ENCODE measurements at regions of chr1 and their contacts with region 1.

Region 1: DNA sequence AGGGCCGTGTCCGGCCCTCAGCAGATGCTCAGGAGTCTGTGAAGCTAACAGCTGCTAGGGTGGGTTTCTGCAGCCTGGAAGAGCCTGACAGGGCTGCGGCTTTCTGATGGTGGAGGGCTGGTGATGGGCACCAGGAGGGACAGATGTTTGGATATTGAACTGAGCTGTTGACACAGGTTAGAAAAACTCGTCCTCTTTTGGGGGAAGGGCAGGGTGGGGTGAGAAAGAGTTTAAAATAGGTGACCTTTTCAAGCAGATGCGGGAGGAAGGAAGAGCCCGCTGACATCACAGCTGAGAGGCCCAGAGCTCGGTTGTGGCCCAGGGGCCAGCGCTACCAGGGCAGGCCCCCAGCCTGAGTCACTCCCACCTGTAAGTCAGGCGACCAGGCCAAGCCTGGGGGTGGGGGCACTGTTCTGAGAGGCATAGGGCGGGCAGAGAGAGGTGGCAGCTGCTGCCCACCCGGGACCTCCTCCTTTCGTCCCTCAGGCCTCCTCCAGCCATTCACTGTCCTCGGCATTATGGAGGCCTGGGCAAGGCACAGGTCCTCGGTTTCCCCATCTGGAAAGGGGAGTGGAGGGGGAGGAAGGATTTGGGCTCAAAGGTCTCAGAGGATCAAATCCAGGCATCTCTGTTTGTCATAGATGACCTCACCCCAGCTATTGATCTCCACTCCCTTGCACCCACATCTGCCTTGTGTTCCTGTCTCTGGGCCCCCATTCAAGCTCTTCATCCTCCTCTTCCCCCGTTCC is 32.3 kb upstream of the ID3 start:
- DNase-seq: peak; percentile 66
- ATAC-seq: peak; percentile 81
- H3K4me3 Mint-ChIP-seq: peak overlapping the region; percentile 62
- H3K27ac Mint-ChIP-seq: peak overlapping the region; percentile 92
- H3K4me1 Mint-ChIP-seq: peaks cover 60% of the 10 kb centered on the region
- H3K27me3 Mint-ChIP-seq: no peaks in the 10 kb centered on the region

Region 2: DNA sequence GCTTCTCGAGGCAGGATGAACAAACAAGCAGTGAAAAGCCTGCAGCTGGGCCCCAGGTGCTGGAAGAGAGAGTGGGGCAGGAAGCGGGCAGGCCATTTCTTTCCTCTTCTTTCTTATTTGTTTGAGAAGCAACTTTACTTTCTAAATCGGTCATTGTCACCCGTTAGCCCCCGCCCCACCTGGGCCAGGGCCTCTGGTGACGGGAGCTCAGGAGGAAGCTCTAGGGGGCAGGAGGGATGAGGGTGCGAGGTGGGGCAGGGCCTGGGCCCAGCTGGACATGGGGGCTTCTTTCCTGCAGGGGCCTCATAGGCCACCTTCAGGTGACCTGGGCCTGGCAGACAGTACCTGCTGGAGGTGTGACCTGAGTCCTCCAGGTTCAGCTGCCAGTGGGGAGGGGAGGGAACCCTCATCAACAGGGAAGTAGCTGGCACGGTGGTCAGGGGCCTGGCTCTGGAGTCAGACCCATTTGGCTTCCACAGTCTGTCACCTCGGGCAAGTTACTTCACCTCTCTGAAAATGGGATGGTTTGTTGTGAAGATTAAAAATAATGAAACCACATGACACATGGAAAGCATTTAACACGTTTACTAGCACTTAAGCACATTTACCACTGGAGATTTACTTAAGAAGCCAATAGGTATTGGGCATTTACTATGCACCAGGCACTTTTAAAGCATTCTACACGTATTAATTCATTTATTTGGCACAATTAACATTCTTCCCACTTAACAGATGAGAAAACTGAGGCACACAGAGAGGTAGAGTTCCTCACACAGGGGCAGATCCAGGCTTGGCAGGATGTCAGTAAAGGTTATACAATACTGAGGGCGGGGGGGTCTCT is 21.8 kb after region 1 on chr1:
- POLR2A ChIA-PET with region 1: interaction called, 87 read pairs
- DNase-seq: peak; percentile 68
- ATAC-seq: peak; percentile 72
- H3K4me3 Mint-ChIP-seq: peak overlapping the region; percentile 60
- H3K27ac Mint-ChIP-seq: peak overlapping the region; percentile 98
- H3K4me1 Mint-ChIP-seq: peaks cover 55% of the 10 kb centered on the region
- H3K27me3 Mint-ChIP-seq: no peaks in the 10 kb centered on the region

Region 3: GRCh38 chr1:23619299-23620188 is 27.9 kb after region 1 on chr1:
- POLR2A ChIA-PET with region 1: interaction called, 87 read pairs
- DNase-seq: peak; percentile 70
- ATAC-seq: peak; percentile 82
- H3K4me3 Mint-ChIP-seq: peak overlapping the region; percentile 81
- H3K27ac Mint-ChIP-seq: peak overlapping the region; percentile 61
- H3K4me1 Mint-ChIP-seq: peaks cover 55% of the 10 kb centered on the region
- H3K27me3 Mint-ChIP-seq: no peaks in the 10 kb centered on the region

Measured in activated naive CD8-positive, alpha-beta T cell treated with anti-CD3 and anti-CD28 coated beads, Interleukin-2, amount 10 ng/mL, durations not matched to agents 7 days and 5 days (primary cell).